CD8-positive, alpha-beta T cell (primary cell): ENCODE measurements at regions of chr5 and their contacts with region 1.

Region 1: DNA sequence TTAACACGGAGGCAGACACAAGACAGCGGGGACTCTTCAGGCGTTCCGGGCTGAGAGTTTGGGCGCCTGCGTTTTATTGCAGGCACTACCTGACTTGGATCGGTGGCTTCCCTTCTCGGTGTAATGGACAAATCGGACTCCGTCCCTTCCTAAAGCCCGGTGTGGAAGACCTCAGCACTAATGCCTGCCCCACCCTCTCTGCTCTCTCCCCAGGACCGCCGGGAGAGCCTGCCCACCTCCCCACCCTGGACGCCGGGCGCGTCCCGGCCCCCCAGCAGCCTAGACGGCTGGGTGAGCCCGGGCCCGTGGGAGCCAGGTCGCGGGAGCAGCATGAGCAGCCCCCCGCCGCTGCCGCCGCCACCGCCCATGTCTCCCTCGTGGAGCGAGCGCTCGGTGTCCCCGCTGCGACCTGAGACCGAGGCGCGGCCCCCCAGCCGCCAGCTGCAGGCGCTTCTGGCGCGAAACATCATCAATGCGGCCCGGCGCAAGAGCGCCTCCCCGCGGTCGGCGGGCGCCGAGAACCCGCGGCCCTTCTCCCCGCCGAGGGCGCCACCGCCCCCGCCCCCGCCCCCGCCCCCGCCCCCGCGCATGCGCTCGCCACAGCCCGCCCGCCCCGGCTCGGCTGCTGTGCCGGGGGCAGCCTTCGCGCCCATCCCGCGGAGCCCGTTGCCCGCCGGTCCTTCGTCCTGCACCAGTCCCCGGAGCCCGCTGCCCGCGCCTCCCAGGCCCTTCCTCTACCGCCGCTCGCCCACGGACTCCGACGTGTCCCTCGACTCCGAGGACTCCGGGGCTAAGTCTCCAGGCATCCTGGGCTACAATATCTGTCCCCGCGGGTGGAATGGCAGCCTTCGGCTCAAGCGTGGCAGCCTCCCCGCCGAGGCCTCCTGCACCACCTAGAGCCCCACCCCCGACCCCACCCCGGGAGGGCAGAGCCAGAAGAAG is 4.6 kb upstream of the MYOZ3 start:
- DNase-seq: peak; percentile 61 to 90 (median 80)
- ATAC-seq: peak; percentile 93
- H3K4me3 ChIP-seq: peak overlapping the region; percentile 51 to 63
- H3K4me3 Mint-ChIP-seq: peak overlapping the region; percentile 78
- H3K27ac ChIP-seq: no peak overlapping the region
- H3K27ac Mint-ChIP-seq: no peak overlapping the region
- H3K4me1 ChIP-seq: peaks cover 6% of the 10 kb centered on the region
- H3K4me1 Mint-ChIP-seq: peaks cover 4% of the 10 kb centered on the region
- H3K27me3 ChIP-seq: no peaks in the 10 kb centered on the region
- H3K27me3 Mint-ChIP-seq: no peaks in the 10 kb centered on the region
- CTCF ChIP-seq: peak; percentile 53

Region 2: DNA sequence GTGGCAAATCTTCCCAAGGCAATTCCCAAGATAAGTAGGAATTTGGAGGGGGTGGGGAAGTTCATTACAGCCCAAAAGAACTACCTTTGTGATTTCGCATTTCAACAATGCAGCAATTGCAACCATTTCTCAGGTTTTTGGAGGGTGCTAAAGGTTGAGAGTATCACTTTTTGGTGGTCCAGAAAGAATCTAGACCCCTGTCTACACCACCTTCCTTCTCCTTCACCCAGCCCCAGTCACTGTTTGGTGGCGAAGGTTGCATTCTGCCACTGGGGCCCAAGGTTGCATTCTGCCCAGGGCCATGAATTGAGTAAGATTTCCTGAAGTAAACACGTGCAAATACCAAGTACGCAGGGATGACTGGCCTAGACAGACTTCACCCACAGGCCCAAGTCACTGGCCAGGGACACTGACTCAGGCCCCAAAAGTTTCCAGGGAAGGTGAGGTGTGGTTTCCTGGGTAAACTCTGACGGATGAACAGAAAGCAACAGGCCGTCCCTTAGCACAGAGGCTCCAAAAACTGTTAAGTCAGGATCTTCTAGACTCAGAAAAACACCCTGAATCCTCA is 717.6 kb before region 1 on chr5:
- CTCF ChIA-PET with region 1: no interaction called
- POLR2A ChIA-PET with region 1: no interaction called
- intact Hi-C with region 1: no loop called
- DNase-seq: peak in 1 of 9 experiments; percentile 23
- ATAC-seq: no peak
- H3K4me3 ChIP-seq: no peak overlapping the region
- H3K4me3 Mint-ChIP-seq: no peak overlapping the region
- H3K27ac ChIP-seq: no peak overlapping the region
- H3K27ac Mint-ChIP-seq: no peak overlapping the region
- H3K4me1 ChIP-seq: no peaks in the 10 kb centered on the region
- H3K4me1 Mint-ChIP-seq: no peaks in the 10 kb centered on the region
- H3K27me3 ChIP-seq: no peaks in the 10 kb centered on the region
- H3K27me3 Mint-ChIP-seq: peaks cover 4% of the 10 kb centered on the region
- CTCF ChIP-seq: no peak

Region 3: DNA sequence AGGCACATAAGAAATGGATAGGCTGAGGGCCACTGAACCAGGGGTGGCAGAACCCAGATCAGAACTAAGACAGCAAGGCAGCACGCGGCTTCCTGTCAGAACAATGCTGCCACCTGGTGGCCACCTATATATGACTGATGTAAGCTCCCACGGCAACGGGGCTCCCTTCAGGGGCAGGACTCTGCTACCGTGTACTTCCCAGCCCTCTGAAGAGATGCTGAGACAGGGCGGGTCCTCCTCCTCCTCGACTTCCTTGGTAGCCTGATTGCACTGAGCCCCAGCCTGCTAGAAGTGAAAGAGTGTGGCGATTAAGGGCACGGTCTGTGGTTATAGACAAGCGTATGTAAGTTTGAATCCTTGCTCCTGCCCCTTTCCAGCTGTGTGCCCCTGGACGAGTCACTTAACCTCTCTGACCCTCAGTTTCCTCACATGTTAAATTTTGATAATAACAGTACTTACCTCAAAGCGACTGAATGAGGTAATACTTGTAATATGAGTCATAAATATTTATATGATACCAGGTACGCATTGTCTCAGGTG is 220.3 kb before region 1 on chr5:
- CTCF ChIA-PET with region 1: no interaction called
- POLR2A ChIA-PET with region 1: no interaction called
- intact Hi-C with region 1: no loop called
- DNase-seq: peak; percentile 84 to 96 (median 92)
- ATAC-seq: peak; percentile 98
- H3K4me3 ChIP-seq: no peak overlapping the region
- H3K4me3 Mint-ChIP-seq: peak overlapping the region; percentile 50
- H3K27ac ChIP-seq: no peak overlapping the region
- H3K27ac Mint-ChIP-seq: peak overlapping the region; percentile 74
- H3K4me1 ChIP-seq: no peaks in the 10 kb centered on the region
- H3K4me1 Mint-ChIP-seq: peaks cover 7% of the 10 kb centered on the region
- H3K27me3 ChIP-seq: no peaks in the 10 kb centered on the region
- H3K27me3 Mint-ChIP-seq: no peaks in the 10 kb centered on the region
- CTCF ChIP-seq: peak; percentile 74

Region 4: DNA sequence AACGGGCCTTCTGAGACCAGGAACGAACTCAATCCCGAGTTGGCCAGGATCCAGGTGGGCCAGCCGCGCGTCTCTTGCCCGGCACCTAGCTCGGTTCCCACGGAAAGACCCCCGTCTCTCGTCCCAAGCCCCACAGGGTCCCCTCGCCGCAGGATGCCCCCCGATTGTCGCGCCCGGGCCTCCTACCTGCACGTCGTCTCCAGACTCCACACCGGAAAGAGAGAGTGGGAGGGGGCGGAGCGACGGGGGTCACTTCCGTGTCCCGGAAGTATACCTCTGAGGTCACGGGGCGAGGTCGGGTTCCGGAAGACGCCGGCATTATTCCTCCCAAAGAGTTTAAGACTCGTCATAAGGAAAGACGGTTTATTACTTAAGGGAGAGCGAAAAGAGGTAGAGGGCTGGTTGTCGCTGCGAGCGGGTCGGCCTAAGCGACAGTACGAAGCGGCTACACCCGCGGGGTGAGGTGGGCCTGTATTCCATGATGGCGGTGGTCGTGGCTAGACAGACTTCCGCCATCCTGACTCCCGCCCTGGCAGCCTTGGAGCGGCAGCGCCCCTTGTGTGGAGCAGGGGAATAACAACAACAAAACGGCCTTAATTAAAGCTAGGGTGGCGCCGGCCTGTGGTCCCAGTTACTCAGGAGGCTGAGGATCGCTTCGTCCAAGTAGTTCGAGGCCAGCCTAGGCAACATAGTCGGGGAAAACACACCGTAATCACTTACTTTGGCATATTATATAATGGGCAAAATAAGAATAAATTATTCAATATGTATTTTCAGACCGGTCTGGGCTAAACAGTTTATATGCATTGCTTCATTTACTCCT is 206.7 kb before region 1 on chr5 and contains the start of gene RPS14:
- CTCF ChIA-PET with region 1: interaction called, 3 read pairs
- POLR2A ChIA-PET with region 1: no interaction called
- intact Hi-C with region 1: loop called in 1 of 2 experiments (anchors 2 kb)
- DNase-seq: peak; percentile 90 to 97 (median 95)
- ATAC-seq: peak; percentile 92
- H3K4me3 ChIP-seq: peak within 1 kb of the TSS; percentile 77 to 89
- H3K4me3 Mint-ChIP-seq: peak within 1 kb of the TSS; percentile 100
- H3K27ac ChIP-seq: peak within 1 kb of the TSS; percentile 93 to 98
- H3K27ac Mint-ChIP-seq: peak within 1 kb of the TSS; percentile 100
- H3K4me1 ChIP-seq: peaks cover 22% of the 10 kb centered on the region
- H3K4me1 Mint-ChIP-seq: peaks cover 36% of the 10 kb centered on the region
- H3K27me3 ChIP-seq: no peaks in the 10 kb centered on the region
- H3K27me3 Mint-ChIP-seq: no peaks in the 10 kb centered on the region
- CTCF ChIP-seq: peak; percentile 84
- total RNA-seq, gene RPS14: 5,604 to 5,613 TPM

Region 5: DNA sequence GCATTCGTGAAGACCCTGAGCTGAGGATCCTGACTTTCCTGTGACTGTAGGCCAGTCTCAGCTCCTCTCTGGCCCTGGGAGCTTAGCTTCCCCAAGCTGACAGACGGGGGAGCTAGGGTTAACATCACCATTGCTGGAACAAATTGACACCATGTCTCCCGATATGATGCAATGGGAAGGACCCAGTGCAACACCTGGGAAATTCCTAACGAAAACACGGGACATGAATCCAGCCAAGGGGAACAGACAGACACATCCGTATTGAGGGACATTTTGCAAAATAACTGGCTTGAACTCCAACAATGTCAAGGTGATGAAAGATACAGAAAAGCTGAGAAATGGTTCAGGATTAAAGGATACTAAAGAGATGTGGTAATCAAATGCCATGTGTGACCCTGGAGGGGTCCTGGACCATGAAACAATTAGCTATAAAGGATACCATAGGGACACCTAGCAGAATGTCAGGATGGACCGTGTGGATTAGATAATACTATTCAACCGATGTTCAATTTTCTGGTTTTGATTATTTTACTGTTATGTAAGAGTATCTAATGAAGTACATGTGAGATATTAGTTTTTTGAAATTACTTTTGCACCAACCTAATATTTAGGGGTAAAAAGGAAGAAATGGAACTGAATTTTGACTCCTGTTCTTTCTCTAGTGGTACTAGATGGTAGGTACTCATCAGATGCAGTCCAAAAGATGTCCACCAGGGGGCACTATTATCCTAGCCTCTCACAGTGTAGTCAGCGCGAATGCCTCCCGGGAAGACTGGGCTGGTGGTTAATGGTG is 95.9 kb before region 1 on chr5:
- CTCF ChIA-PET with region 1: interaction called, 18 read pairs
- POLR2A ChIA-PET with region 1: no interaction called
- intact Hi-C with region 1: loop called (anchors 1 kb)
- DNase-seq: peak; percentile 68 to 93 (median 84)
- ATAC-seq: peak; percentile 97
- H3K4me3 ChIP-seq: no peak overlapping the region
- H3K4me3 Mint-ChIP-seq: no peak overlapping the region
- H3K27ac ChIP-seq: no peak overlapping the region
- H3K27ac Mint-ChIP-seq: no peak overlapping the region
- H3K4me1 ChIP-seq: no peaks in the 10 kb centered on the region
- H3K4me1 Mint-ChIP-seq: no peaks in the 10 kb centered on the region
- H3K27me3 ChIP-seq: no peaks in the 10 kb centered on the region
- H3K27me3 Mint-ChIP-seq: peaks cover 3% of the 10 kb centered on the region
- CTCF ChIP-seq: peak; percentile 92

Region 6: GRCh38 chr5:150626853-150627276 is 29.6 kb before region 1 on chr5:
- CTCF ChIA-PET with region 1: no interaction called
- POLR2A ChIA-PET with region 1: no interaction called
- intact Hi-C with region 1: no loop called
- DNase-seq: no peak
- ATAC-seq: no peak
- H3K4me3 ChIP-seq: no peak overlapping the region
- H3K4me3 Mint-ChIP-seq: no peak overlapping the region
- H3K27ac ChIP-seq: no peak overlapping the region
- H3K27ac Mint-ChIP-seq: no peak overlapping the region
- H3K4me1 ChIP-seq: peaks cover 7% of the 10 kb centered on the region
- H3K4me1 Mint-ChIP-seq: peaks cover 10% of the 10 kb centered on the region
- H3K27me3 ChIP-seq: peaks cover 6% of the 10 kb centered on the region in 2 experiments
- H3K27me3 Mint-ChIP-seq: peaks cover 25% of the 10 kb centered on the region
- CTCF ChIP-seq: no peak

Region 7: GRCh38 chr5:150689120-150689519 is 32.7 kb after region 1 on chr5:
- CTCF ChIA-PET with region 1: no interaction called
- POLR2A ChIA-PET with region 1: no interaction called
- intact Hi-C with region 1: no loop called
- DNase-seq: no peak
- ATAC-seq: no peak
- H3K4me3 ChIP-seq: no peak overlapping the region
- H3K4me3 Mint-ChIP-seq: no peak overlapping the region
- H3K27ac ChIP-seq: no peak overlapping the region
- H3K27ac Mint-ChIP-seq: no peak overlapping the region
- H3K4me1 ChIP-seq: no peaks in the 10 kb centered on the region
- H3K4me1 Mint-ChIP-seq: no peaks in the 10 kb centered on the region
- H3K27me3 ChIP-seq: no peaks in the 10 kb centered on the region
- H3K27me3 Mint-ChIP-seq: no peaks in the 10 kb centered on the region
- CTCF ChIP-seq: no peak

Region 8: GRCh38 chr5:150700594-150701293 is 44.3 kb after region 1 on chr5 and contains the start of gene RBM22:
- CTCF ChIA-PET with region 1: interaction called, 3 read pairs
- POLR2A ChIA-PET with region 1: interaction called, 15 read pairs
- intact Hi-C with region 1: loop called (anchors 1 to 2 kb)
- DNase-seq: peak; percentile 82 to 96 (median 94)
- ATAC-seq: peak; percentile 90
- H3K4me3 ChIP-seq: peak within 1 kb of the TSS; percentile 80 to 81
- H3K4me3 Mint-ChIP-seq: no peak within 1 kb of the TSS
- H3K27ac ChIP-seq: peak within 1 kb of the TSS; percentile 94 to 97
- H3K27ac Mint-ChIP-seq: no peak within 1 kb of the TSS
- H3K4me1 ChIP-seq: peaks cover 19% of the 10 kb centered on the region
- H3K4me1 Mint-ChIP-seq: peaks cover 2% of the 10 kb centered on the region
- H3K27me3 ChIP-seq: no peaks in the 10 kb centered on the region
- H3K27me3 Mint-ChIP-seq: no peaks in the 10 kb centered on the region
- CTCF ChIP-seq: peak; percentile 85
- total RNA-seq, gene RBM22: 119 to 125 TPM